ENCODE measurements at regions of chr6 and their contacts with region 1.

Region 1: GRCh38 chr6:132279592-132280139 is 121.6 kb downstream of the MOXD1 start:
- DNase-seq: peak; percentile 80
- H3K4me3 Mint-ChIP-seq: peak overlapping the region; percentile 73
- H3K27ac Mint-ChIP-seq: no peak overlapping the region
- H3K4me1 Mint-ChIP-seq: no peaks in the 10 kb centered on the region
- H3K27me3 Mint-ChIP-seq: peaks cover 19% of the 10 kb centered on the region

Region 2: DNA sequence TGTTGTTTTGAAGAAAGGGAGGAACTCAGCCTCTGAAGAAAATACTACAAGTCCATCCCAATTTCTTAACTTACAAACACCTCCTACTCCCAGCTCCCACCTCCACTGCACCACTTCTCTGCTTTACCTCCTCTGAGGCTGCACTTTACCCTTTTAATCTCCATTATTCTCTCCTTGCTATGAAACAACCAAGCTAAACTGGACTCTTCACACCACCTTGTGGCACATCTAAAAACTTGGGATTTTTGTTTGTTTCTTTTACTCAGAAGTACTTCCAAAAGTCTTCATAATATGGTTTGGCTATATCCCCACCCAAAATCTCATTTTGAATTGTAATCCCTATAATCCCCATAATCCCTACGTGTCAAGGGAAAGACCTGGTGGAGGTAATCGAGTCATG is 20.6 kb before region 1 on chr6:
- CTCF ChIA-PET with region 1: interaction called, 20 read pairs
- POLR2A ChIA-PET with region 1: no interaction called
- intact Hi-C with region 1: no loop called
- DNase-seq: no peak
- H3K4me3 Mint-ChIP-seq: no peak overlapping the region
- H3K27ac Mint-ChIP-seq: no peak overlapping the region
- H3K4me1 Mint-ChIP-seq: no peaks in the 10 kb centered on the region
- H3K27me3 Mint-ChIP-seq: peaks cover 13% of the 10 kb centered on the region

Region 3: DNA sequence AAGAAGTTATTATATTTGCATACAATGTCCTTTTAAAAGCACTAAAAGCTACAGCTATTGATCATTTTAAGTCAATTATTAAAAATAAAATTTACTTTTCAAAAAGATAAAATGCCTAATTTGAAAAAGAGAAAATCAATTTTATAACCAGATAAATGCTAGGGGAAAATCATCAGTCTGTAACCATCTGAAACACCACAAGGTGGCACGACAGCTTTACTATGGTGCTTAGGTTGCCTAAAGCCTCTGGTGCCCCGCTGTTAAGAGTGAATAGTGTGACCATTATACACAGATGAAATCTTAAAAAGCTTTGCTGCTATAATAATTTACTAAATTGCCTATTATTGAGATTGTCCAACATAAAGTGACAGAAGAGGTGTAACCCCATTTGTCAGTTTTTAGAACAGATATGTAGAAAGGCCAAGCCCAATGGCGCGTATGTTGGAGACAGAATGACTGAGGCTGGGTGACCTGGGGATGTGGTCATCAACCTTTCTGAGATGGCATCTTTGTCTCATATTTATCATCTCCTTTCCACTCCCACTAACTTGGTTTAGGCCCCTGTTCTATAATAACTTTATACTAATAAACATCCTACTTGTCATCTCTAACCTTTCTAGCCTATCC is 20.8 kb after region 1 on chr6:
- CTCF ChIA-PET with region 1: interaction called, 140 read pairs
- POLR2A ChIA-PET with region 1: no interaction called
- intact Hi-C with region 1: loop called (anchors 1 kb)
- DNase-seq: peak; percentile 21
- H3K4me3 Mint-ChIP-seq: no peak overlapping the region
- H3K27ac Mint-ChIP-seq: no peak overlapping the region
- H3K4me1 Mint-ChIP-seq: no peaks in the 10 kb centered on the region
- H3K27me3 Mint-ChIP-seq: peaks cover 12% of the 10 kb centered on the region

Region 4: GRCh38 chr6:132465530-132466485 is 186.1 kb after region 1 on chr6:
- CTCF ChIA-PET with region 1: interaction called, 25 read pairs
- POLR2A ChIA-PET with region 1: no interaction called
- intact Hi-C with region 1: no loop called
- DNase-seq: no peak
- H3K4me3 Mint-ChIP-seq: no peak overlapping the region
- H3K27ac Mint-ChIP-seq: no peak overlapping the region
- H3K4me1 Mint-ChIP-seq: no peaks in the 10 kb centered on the region
- H3K27me3 Mint-ChIP-seq: no peaks in the 10 kb centered on the region

Region 5: DNA sequence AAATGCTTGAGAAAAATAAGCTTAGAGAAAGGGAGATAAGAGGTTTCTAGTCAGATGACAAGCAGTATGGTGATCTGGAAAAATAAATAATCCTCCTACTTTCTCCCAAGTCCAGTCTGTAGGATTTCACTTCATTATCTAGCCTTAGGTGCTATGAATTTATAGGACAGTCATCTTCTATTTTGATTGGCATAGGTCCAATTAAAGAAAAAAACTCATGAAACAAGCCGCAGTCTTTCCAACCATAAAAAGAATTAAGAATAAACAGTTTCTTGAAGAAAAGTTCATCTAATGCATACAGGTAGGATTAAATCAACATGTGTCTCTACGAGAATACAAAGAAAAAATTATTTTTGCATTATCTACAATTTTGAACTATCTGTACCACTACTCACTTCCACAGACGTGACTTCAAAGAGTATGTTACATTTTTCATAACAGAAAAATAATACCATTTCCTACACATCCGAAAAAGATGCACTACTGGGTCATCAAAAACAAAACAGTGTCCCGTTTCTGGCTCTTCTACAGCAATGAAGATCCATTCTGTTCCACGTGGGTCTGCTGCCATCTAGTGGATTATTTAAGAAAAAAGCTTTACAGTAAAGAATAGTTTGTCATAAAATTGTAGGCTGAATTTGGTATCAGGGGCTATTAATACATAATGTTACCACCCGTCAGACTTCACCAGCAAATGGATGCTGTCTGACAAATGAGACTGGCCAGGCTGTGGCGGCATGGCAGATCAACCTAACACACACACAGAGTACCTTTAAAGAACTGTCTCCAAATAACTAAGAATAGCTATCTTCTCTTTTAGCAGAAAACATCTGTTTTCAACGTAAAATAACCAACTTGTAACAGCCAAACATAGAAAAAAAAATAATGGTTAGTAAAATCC is 204.4 kb after region 1 on chr6:
- CTCF ChIA-PET with region 1: interaction called, 287 read pairs
- POLR2A ChIA-PET with region 1: no interaction called
- intact Hi-C with region 1: loop called (anchors 1 kb)
- DNase-seq: peak; percentile 34
- H3K4me3 Mint-ChIP-seq: no peak overlapping the region
- H3K27ac Mint-ChIP-seq: no peak overlapping the region
- H3K4me1 Mint-ChIP-seq: peaks cover 22% of the 10 kb centered on the region
- H3K27me3 Mint-ChIP-seq: no peaks in the 10 kb centered on the region

Region 6: GRCh38 chr6:132512638-132513632 is 233.3 kb after region 1 on chr6 and contains the start of gene STX7:
- CTCF ChIA-PET with region 1: interaction called, 11 read pairs
- POLR2A ChIA-PET with region 1: no interaction called
- intact Hi-C with region 1: no loop called
- DNase-seq: peak; percentile 90
- H3K4me3 Mint-ChIP-seq: peak within 1 kb of the TSS; percentile 95
- H3K27ac Mint-ChIP-seq: peak within 1 kb of the TSS; percentile 69
- H3K4me1 Mint-ChIP-seq: peaks cover 36% of the 10 kb centered on the region
- H3K27me3 Mint-ChIP-seq: no peaks in the 10 kb centered on the region
- total RNA-seq, gene STX7: 16.2 to 19.0 TPM

Measured in activated CD4-positive, alpha-beta memory T cell treated with anti-CD3 and anti-CD28 coated beads for 36 hours (primary cell).